Activated CD4-positive, alpha-beta memory T cell treated with anti-CD3 and anti-CD28 coated beads, Interleukin-2, amount 10 ng/mL, durations not matched to agents 7 days and 5 days (primary cell): ENCODE measurements at regions of chr5 and their contacts with region 1.

Region 1: DNA sequence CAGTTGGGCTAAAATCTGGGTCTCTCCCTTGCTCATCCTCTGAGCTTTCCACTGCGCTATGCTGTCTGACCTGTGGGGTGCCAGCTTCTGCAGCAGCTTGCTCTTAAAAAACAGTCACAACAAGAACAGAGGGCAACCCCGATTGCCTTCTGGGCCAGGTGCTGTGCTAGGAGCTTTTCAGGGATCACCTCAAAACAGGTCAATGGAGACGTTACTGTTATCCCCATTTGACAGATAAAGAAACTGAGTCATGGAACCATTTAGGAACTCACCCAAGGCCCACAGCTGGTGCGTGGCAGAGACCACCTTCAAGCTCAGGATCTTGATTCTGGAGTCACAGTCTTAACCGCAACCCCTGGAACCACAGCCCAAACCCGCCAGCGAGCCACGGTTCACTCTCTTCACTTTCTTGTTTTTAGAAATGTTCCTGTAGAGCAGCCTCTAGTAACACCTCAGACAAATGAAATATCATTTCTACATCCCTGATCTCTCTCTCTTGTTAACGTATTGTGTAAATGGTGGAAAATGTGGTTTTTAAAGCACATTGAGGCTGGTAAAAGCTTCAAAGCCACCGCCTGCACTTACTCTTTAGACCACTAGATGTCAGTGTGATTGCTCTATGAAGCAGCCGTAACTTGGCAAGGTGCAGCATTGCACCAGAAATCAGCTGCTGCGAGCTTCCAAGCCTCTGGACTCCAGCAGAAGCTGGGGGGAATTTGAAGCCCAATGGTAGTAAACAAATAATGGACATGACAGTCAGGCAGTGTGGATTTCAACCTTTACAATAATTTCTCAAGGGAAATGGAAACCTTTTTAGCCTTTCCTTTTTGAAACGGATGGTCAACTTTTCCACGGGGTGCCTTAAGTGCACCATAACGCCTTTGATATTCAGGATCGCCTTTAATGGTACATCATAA is 1.7 kb downstream of the FYB1 start:
- DNase-seq: peak; percentile 79
- H3K4me3 Mint-ChIP-seq: peak overlapping the region; percentile 74
- H3K27ac Mint-ChIP-seq: peak overlapping the region; percentile 78
- H3K4me1 Mint-ChIP-seq: peaks cover 57% of the 10 kb centered on the region
- H3K27me3 Mint-ChIP-seq: no peaks in the 10 kb centered on the region

Region 2: DNA sequence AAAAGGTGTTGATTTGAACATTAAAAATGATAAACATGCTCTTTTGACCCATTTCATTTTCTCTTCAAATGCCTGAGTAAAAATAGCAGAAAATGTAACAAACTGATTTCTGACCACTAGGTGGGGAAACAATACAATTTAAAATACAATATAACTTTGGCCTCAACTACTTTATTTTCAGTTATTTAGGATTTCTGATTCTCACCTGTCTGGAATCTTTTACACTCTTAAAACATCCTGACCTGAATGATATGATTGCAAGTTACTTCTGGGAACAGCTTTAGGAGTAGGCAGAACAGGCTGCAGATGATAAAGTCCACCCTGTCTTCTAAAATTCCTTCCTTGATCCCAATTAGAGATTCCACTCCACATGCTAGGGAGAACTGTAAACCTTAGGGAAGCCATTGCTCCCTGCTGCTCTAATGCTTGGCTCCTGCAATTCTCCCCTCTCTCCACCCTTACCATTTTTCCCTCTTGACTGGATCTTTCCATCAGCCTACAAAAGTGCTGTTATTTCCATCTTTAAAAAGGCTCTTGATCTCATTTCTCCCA is 68.6 kb before region 1 on chr5:
- CTCF ChIA-PET with region 1: interaction called, 18 read pairs
- POLR2A ChIA-PET with region 1: interaction called, 18 read pairs
- DNase-seq: no peak
- H3K4me3 Mint-ChIP-seq: no peak overlapping the region
- H3K27ac Mint-ChIP-seq: peak overlapping the region; percentile 45
- H3K4me1 Mint-ChIP-seq: peaks cover 56% of the 10 kb centered on the region
- H3K27me3 Mint-ChIP-seq: no peaks in the 10 kb centered on the region

Region 3: GRCh38 chr5:39177631-39177964 is 40.0 kb before region 1 on chr5:
- CTCF ChIA-PET with region 1: interaction called, 28 read pairs
- POLR2A ChIA-PET with region 1: interaction called, 125 read pairs
- DNase-seq: no peak
- H3K4me3 Mint-ChIP-seq: peak overlapping the region; percentile 65
- H3K27ac Mint-ChIP-seq: peak overlapping the region; percentile 92
- H3K4me1 Mint-ChIP-seq: peaks cover 96% of the 10 kb centered on the region
- H3K27me3 Mint-ChIP-seq: no peaks in the 10 kb centered on the region

Region 4: GRCh38 chr5:39231705-39232525 is 14.3 kb after region 1 on chr5:
- CTCF ChIA-PET with region 1: interaction called, 55 read pairs
- POLR2A ChIA-PET with region 1: interaction called, 29 read pairs
- DNase-seq: peak; percentile 45
- H3K4me3 Mint-ChIP-seq: no peak overlapping the region
- H3K27ac Mint-ChIP-seq: peak overlapping the region; percentile 83
- H3K4me1 Mint-ChIP-seq: peaks cover 19% of the 10 kb centered on the region
- H3K27me3 Mint-ChIP-seq: no peaks in the 10 kb centered on the region

Region 5: GRCh38 chr5:39283231-39283818 is 65.7 kb after region 1 on chr5:
- CTCF ChIA-PET with region 1: interaction called, 126 read pairs
- POLR2A ChIA-PET with region 1: interaction called, 19 read pairs
- DNase-seq: peak; percentile 60
- H3K4me3 Mint-ChIP-seq: no peak overlapping the region
- H3K27ac Mint-ChIP-seq: no peak overlapping the region
- H3K4me1 Mint-ChIP-seq: peaks cover 16% of the 10 kb centered on the region
- H3K27me3 Mint-ChIP-seq: peaks cover 13% of the 10 kb centered on the region

Region 6: DNA sequence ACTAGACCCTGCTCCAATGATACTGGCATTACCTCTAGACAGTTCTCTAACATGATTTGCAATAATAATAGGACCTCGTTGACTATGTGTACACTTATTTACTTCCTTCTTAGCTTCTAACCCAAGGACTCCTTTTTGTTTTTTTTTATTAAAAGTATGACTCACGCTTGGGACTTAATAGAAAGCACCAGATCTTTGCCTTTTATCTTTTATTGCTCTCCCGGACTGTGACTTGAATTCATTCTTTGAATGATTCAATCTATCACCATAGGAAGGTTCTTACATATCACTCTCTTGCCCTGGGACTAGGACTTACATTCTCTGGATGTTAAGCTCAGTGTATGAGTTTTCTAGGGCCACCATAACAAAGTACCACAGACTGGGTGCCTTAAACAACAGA is 137.7 kb after region 1 on chr5:
- CTCF ChIA-PET with region 1: no interaction called
- POLR2A ChIA-PET with region 1: no interaction called
- DNase-seq: no peak
- H3K4me3 Mint-ChIP-seq: no peak overlapping the region
- H3K27ac Mint-ChIP-seq: no peak overlapping the region
- H3K4me1 Mint-ChIP-seq: no peaks in the 10 kb centered on the region
- H3K27me3 Mint-ChIP-seq: peaks cover 2% of the 10 kb centered on the region